ENCODE measurements at regions of chr5 and their contacts with region 1.

Region 1: DNA sequence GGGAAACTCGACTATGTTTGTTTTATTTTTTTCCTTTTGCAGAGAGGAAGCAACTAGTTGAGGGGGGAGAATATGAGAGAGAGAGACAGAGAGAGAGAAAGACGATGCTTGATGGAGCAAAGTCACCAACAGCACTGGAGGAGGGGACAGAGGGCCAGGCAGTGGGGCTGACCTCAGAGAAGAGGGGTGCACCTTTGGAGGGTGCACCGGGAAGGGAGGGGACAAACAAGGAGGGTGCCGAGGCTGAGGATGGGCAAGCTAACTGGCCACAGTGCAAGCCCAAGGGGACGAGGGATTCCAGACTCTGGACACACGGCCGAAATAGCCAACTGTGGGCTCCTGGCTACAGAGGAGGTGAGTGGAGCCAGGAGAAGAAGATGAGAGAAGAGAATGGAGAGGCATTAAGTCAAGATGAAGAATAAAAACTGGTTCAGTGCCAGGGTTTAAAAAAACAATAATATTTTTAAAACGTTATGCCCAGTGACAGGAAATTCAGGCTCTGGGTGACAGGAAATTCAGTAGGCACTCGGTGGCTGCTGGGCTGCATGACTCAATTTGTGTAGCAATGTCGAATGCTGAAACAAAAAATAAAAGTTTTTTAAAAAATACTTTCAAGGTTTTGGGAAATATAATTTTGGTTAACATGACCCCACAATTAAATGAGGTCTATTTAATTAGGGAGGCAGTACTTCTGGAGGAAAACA is 13.3 kb upstream of the GLRX start:
- DNase-seq: no peak
- H3K4me3 ChIP-seq: no peak overlapping the region
- H3K27ac ChIP-seq: no peak overlapping the region
- H3K4me1 ChIP-seq: peaks cover 0 to 3% (median 0%) of the 10 kb centered on the region in 4 experiments; a peak in 2 of 7 replicates
- H3K27me3 ChIP-seq: no peaks in the 10 kb centered on the region
- CTCF ChIP-seq: no peak
- EP300 ChIP-seq: no peak
- POLR2A ChIP-seq: no peak
- RAD21 ChIP-seq: no peak

Region 2: DNA sequence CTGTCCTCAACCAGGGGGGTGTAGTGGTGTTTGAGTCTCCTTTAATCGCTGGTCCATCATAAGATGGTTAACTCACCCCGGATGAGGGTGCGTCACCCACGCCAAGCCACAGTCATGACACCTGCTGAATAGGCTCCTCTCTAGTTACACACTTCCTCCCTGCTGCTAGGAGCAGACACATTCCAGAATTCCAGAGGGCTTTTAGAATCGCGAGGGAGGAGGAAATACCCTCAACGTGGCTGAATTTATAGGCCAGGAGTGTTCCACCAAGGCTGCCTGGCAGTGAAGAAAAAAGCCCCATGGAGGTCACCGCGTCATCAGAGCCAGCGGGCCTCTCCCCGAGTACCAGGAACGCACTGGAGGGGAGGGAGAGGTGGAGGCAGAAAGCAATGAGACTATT is 18.4 kb before region 1 on chr5:
- CTCF ChIA-PET with region 1: interaction called, 12 read pairs
- POLR2A ChIA-PET with region 1: interaction called, 22 read pairs
- DNase-seq: no peak
- H3K4me3 ChIP-seq: no peak overlapping the region
- H3K27ac ChIP-seq: no peak overlapping the region
- H3K4me1 ChIP-seq: peaks cover 2 to 17% (median 8%) of the 10 kb centered on the region in 4 experiments; a peak in 5 of 7 replicates
- H3K27me3 ChIP-seq: peaks cover 0 to 1% (median 0%) of the 10 kb centered on the region in 4 experiments; a peak in 1 of 7 replicates
- CTCF ChIP-seq: no peak
- EP300 ChIP-seq: no peak
- POLR2A ChIP-seq: no peak
- RAD21 ChIP-seq: no peak

Region 3: GRCh38 chr5:95822542-95823181 is 13.2 kb before region 1 on chr5 and contains the start of gene GLRX:
- CTCF ChIA-PET with region 1: interaction called, 12 read pairs
- POLR2A ChIA-PET with region 1: interaction called, 22 read pairs
- DNase-seq: peak; percentile 47 to 68
- H3K4me3 ChIP-seq: peak within 1 kb of the TSS; percentile 73 to 89 (median 78)
- H3K27ac ChIP-seq: no peak within 1 kb of the TSS
- H3K4me1 ChIP-seq: peaks cover 5 to 20% (median 16%) of the 10 kb centered on the region in 4 experiments; a peak in 6 of 7 replicates
- H3K27me3 ChIP-seq: no peaks in the 10 kb centered on the region; a peak in 1 of 7 replicates
- CTCF ChIP-seq: no peak
- EP300 ChIP-seq: no peak
- POLR2A ChIP-seq: peak in 1 of 2 experiments; percentile 80; a peak in 2 of 3 replicates
- RAD21 ChIP-seq: no peak
- total RNA-seq, gene GLRX: 21.6 and 22.9 TPM in 2 replicates

Region 4: DNA sequence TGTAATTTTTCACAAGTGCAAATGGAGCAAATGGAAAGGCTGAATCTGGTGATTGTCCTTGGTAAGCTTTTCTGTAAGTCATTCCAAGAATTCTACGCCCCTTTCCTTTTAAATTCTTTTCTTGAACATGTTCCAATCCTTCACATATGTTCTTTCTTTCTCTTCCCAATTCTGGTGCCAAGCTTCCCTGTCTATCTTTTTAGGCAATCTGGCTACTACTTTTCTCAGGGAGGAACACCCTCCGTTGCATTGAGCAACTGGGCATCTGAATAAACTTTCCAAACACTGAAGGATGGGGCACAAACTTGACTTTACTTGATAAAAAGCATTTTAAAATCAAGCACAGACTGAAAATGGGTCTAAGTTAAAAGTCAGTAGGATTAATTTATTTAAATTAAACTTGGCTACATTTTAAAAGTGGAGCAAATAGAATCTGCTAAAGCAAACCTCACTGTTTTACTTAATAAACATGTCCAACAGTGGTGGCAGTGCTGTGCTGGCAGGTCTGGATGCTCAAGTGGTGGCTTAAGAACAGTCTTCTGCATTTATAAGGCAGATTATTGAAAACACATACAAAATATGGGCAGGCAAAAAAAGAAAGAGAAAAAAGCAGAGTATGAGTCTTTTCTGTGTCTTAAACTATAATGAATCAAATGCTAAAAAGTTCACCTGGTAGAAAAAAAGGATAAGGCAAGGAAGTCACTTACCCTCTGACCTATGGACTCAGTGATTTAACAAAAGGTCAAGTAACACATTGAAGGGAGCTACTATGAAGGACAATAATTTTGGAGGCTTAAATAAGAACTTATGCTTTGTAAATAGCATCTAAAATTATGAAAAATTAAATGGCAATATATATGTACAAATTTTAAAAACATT is 120.4 kb after region 1 on chr5:
- CTCF ChIA-PET with region 1: no interaction called
- POLR2A ChIA-PET with region 1: no interaction called
- DNase-seq: no peak
- H3K4me3 ChIP-seq: no peak overlapping the region
- H3K27ac ChIP-seq: no peak overlapping the region
- H3K4me1 ChIP-seq: peaks cover 9 to 22% (median 16%) of the 10 kb centered on the region in 4 experiments; a peak in 6 of 7 replicates
- H3K27me3 ChIP-seq: peaks cover 0 to 12% (median 9%) of the 10 kb centered on the region in 4 experiments; a peak in 5 of 7 replicates
- CTCF ChIP-seq: no peak
- EP300 ChIP-seq: no peak
- POLR2A ChIP-seq: no peak
- RAD21 ChIP-seq: no peak

Region 5: GRCh38 chr5:96093890-96094381 is 258.1 kb after region 1 on chr5:
- CTCF ChIA-PET with region 1: no interaction called
- POLR2A ChIA-PET with region 1: no interaction called
- DNase-seq: no peak
- H3K4me3 ChIP-seq: no peak overlapping the region
- H3K27ac ChIP-seq: no peak overlapping the region
- H3K4me1 ChIP-seq: peaks cover 0 to 2% (median 0%) of the 10 kb centered on the region in 4 experiments; a peak in 1 of 7 replicates
- H3K27me3 ChIP-seq: peaks cover 0 to 1% (median 0%) of the 10 kb centered on the region in 4 experiments; a peak in 1 of 7 replicates
- CTCF ChIP-seq: no peak
- EP300 ChIP-seq: no peak
- POLR2A ChIP-seq: no peak
- RAD21 ChIP-seq: no peak